GM12878 (cell line): ENCODE measurements at regions of chr7 and their contacts with region 1.

Region 1: GRCh38 chr7:137798073-137798763 is 48.6 kb downstream of the DGKI start:
- DNase-seq: peak; percentile 59
- ATAC-seq: peak; percentile 96
- H3K4me3 ChIP-seq: no peak overlapping the region
- H3K27ac ChIP-seq: no peak overlapping the region; the same call in 1 of the 2 replicates
- H3K4me1 ChIP-seq: no peaks in the 10 kb centered on the region
- H3K27me3 ChIP-seq: no peaks in the 10 kb centered on the region
- CTCF ChIP-seq: no peak
- EP300 ChIP-seq: peak; percentile 48 to 84; a peak in 3 of 4 replicates
- POLR2A ChIP-seq: no peak
- RAD21 ChIP-seq: no peak

Region 2: DNA sequence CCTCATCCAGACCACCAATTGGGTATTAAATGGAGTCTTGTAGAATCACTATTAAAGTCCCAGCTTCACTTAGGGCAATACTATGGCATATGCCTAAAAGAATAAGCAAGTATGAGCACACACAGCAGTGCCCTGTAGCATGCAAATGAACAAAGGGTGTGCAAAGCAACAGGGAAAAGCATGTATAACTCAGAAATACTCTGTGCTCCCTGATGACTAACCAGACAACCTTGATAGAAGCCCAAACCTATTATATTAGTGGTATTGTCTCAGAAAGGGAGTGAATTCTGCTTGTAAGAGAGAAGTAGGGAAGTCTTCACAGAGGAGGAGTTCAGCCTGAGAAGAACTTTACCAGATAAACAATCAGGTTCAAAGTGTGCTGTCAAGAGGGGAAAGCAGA is 82.7 kb before region 1 on chr7:
- CTCF ChIA-PET with region 1: no interaction called
- POLR2A ChIA-PET with region 1: no interaction called
- RAD21 ChIA-PET with region 1: no interaction called
- SMC1A ChIA-PET with region 1: no interaction called
- in situ Hi-C with region 1: no loop called
- intact Hi-C with region 1: no loop called
- DNase-seq: no peak
- ATAC-seq: no peak
- H3K4me3 ChIP-seq: no peak overlapping the region
- H3K27ac ChIP-seq: no peak overlapping the region
- H3K4me1 ChIP-seq: no peaks in the 10 kb centered on the region
- H3K27me3 ChIP-seq: no peaks in the 10 kb centered on the region
- CTCF ChIP-seq: no peak
- EP300 ChIP-seq: no peak
- POLR2A ChIP-seq: no peak
- RAD21 ChIP-seq: no peak

Region 3: DNA sequence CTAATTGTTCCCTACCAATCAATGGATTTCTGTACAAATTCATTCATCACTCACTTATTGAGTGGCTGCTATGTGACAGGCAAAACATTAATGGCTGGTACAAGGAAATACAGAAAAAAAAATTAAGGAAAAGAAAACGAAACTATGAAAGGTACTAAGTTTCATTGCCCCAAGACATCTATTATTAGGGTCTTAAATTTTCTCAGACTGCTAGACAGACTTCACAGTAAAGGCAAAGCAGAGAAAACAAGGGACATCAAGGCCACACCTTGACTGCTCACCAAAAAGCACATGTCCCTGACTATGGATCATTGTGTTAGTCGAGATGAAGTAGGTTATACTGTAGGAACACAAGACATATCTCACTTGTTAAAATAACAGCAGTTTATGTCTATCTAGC is 12.0 kb after region 1 on chr7:
- CTCF ChIA-PET with region 1: interaction called, 13 read pairs
- POLR2A ChIA-PET with region 1: interaction called, 5 read pairs
- RAD21 ChIA-PET with region 1: interaction called, 6 read pairs
- SMC1A ChIA-PET with region 1: interaction called, 103 read pairs
- in situ Hi-C with region 1: no loop called
- intact Hi-C with region 1: no loop called
- DNase-seq: no peak
- ATAC-seq: peak; percentile 31
- H3K4me3 ChIP-seq: no peak overlapping the region
- H3K27ac ChIP-seq: no peak overlapping the region
- H3K4me1 ChIP-seq: peaks cover 3% of the 10 kb centered on the region; the same call in 1 of the 2 replicates
- H3K27me3 ChIP-seq: no peaks in the 10 kb centered on the region
- CTCF ChIP-seq: no peak
- EP300 ChIP-seq: no peak
- POLR2A ChIP-seq: no peak
- RAD21 ChIP-seq: no peak

Region 4: DNA sequence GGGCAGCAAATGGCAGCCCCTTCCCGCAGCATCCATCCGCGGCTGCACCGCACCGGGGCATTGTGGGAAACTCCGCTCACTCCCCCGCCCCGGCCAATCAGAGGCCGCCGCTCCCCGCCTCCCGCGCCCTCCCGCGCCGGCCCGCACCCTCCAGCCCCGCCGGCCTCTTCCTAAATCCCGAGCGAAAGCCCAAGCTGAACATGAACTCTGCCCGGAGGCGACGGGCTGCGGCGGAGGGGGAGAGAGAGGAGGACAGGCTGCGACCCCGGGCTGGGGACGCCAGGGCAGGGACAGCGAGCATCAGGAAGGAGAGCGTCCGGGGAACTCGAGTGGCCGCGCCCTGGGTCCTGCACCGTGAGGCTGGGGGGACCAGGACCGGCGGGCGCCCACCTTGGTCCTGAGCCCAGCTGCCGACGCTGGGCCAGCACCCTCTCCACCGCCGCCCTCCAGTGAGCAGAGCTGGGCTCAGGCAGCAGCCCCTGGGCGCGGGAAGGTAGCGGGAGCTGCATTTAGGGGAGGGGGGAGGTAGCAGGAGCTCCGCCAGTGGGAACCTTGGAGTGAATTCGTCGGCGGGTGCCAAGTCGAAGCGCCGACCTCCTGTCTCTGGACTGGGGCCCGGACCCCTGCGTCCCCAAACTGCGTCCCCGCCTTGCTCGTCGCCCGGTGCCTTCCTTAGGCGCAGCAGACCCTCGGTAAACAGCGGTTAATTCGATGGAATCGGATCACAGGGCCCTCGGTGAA is 48.8 kb after region 1 on chr7 and contains the start of gene DGKI:
- CTCF ChIA-PET with region 1: no interaction called
- POLR2A ChIA-PET with region 1: no interaction called
- RAD21 ChIA-PET with region 1: interaction called, 3 read pairs
- SMC1A ChIA-PET with region 1: interaction called, 3 read pairs
- in situ Hi-C with region 1: no loop called
- intact Hi-C with region 1: loop called (anchors 1 kb)
- DNase-seq: no peak
- ATAC-seq: peak; percentile 67
- H3K4me3 ChIP-seq: peak within 1 kb of the TSS; percentile 17; the same call in 1 of the 2 replicates
- H3K27ac ChIP-seq: no peak within 1 kb of the TSS
- H3K4me1 ChIP-seq: no peaks in the 10 kb centered on the region
- H3K27me3 ChIP-seq: peaks cover 1 to 14% of the 10 kb centered on the region in 2 experiments; a peak in 2 of 4 replicates
- CTCF ChIP-seq: no peak
- EP300 ChIP-seq: no peak
- POLR2A ChIP-seq: peak; percentile 51
- RAD21 ChIP-seq: no peak
- polyA plus RNA-seq, gene DGKI: 28.3 to 37.1 TPM